HepG2 (cell line): ENCODE measurements at regions of chr21 and their contacts with region 1.

Region 1: GRCh38 chr21:22791986-22792560 is 1793.9 kb downstream of the NCAM2 start:
- DNase-seq: peak; percentile 12
- ATAC-seq: no peak
- H3K4me3 ChIP-seq: no peak overlapping the region
- H3K27ac ChIP-seq: no peak overlapping the region
- H3K4me1 ChIP-seq: no peaks in the 10 kb centered on the region
- H3K27me3 ChIP-seq: no peaks in the 10 kb centered on the region
- CTCF ChIP-seq: peak; percentile 41
- EP300 ChIP-seq: no peak
- POLR2A ChIP-seq: no peak
- RAD21 ChIP-seq: no peak

Region 2: DNA sequence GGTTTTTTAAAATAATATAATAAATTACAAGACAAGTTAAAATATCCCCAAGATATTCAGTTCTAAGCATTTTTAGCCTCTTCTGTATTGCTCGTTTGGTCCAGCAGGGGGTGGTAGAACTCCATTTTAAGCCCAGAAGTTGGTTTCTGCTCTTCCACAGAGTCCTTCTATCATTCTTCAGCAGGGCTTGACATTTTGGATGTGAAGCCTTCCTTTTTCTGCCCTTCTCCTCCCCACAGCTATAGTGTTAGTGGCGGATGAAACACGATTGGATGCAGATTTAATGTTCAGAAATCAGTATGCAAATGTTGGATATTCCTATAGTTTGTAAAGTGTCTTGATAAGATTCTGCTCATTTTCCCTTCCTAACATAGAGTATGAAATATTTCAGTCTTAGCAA is 1792.4 kb before region 1 on chr21:
- CTCF ChIA-PET with region 1: interaction called, 5 read pairs
- POLR2A ChIA-PET with region 1: no interaction called
- in situ Hi-C with region 1: loop called (anchors 5 kb)
- intact Hi-C with region 1: no loop called
- DNase-seq: peak; percentile 9
- ATAC-seq: 0 out of 3 replicates have a peak, but pooled peaks have one; percentile 16
- H3K4me3 ChIP-seq: no peak overlapping the region
- H3K27ac ChIP-seq: no peak overlapping the region
- H3K4me1 ChIP-seq: no peaks in the 10 kb centered on the region
- H3K27me3 ChIP-seq: peaks cover 0 to 6% of the 10 kb centered on the region in 2 experiments; a peak in 1 of 5 replicates
- CTCF ChIP-seq: peak; percentile 63
- EP300 ChIP-seq: no peak
- POLR2A ChIP-seq: no peak
- RAD21 ChIP-seq: no peak

Region 3: DNA sequence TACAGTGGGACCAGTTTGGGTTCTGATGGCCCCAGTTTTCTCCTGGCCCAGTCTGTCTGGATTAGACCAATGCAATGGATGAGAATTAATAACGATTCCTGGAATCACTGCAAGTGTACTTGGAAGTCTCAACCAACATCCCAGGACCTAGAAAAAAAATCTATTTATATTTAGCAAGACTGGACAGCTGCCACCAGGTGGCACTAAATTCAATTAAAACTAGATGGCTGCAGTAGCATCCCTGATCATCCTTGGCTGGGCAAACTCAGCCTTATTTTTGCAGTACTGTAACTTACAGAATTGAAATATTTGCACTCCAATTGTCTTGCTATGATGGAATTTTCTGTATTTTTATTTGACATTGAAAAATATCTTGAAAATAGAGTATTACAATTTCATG is 1628.2 kb before region 1 on chr21:
- CTCF ChIA-PET with region 1: interaction called, 5 read pairs
- POLR2A ChIA-PET with region 1: no interaction called
- in situ Hi-C with region 1: loop called (anchors 10 kb)
- intact Hi-C with region 1: no loop called
- DNase-seq: peak; percentile 26
- ATAC-seq: peak; percentile 60; the same call in 2 of the 3 replicates
- H3K4me3 ChIP-seq: no peak overlapping the region
- H3K27ac ChIP-seq: no peak overlapping the region
- H3K4me1 ChIP-seq: no peaks in the 10 kb centered on the region
- H3K27me3 ChIP-seq: no peaks in the 10 kb centered on the region
- CTCF ChIP-seq: no peak; the same call in 1 of the 2 replicates
- EP300 ChIP-seq: no peak
- POLR2A ChIP-seq: no peak
- RAD21 ChIP-seq: no peak

Region 4: GRCh38 chr21:21232320-21232719 is 1559.8 kb before region 1 on chr21:
- CTCF ChIA-PET with region 1: no interaction called
- POLR2A ChIA-PET with region 1: no interaction called
- in situ Hi-C with region 1: no loop called
- intact Hi-C with region 1: loop called (anchors 10 kb)
- DNase-seq: no peak
- ATAC-seq: no peak
- H3K4me3 ChIP-seq: no peak overlapping the region
- H3K27ac ChIP-seq: no peak overlapping the region
- H3K4me1 ChIP-seq: no peaks in the 10 kb centered on the region
- H3K27me3 ChIP-seq: no peaks in the 10 kb centered on the region
- CTCF ChIP-seq: no peak
- EP300 ChIP-seq: no peak
- POLR2A ChIP-seq: no peak
- RAD21 ChIP-seq: no peak